ENCODE measurements at regions of chr22 and their contacts with region 1.

Region 1: DNA sequence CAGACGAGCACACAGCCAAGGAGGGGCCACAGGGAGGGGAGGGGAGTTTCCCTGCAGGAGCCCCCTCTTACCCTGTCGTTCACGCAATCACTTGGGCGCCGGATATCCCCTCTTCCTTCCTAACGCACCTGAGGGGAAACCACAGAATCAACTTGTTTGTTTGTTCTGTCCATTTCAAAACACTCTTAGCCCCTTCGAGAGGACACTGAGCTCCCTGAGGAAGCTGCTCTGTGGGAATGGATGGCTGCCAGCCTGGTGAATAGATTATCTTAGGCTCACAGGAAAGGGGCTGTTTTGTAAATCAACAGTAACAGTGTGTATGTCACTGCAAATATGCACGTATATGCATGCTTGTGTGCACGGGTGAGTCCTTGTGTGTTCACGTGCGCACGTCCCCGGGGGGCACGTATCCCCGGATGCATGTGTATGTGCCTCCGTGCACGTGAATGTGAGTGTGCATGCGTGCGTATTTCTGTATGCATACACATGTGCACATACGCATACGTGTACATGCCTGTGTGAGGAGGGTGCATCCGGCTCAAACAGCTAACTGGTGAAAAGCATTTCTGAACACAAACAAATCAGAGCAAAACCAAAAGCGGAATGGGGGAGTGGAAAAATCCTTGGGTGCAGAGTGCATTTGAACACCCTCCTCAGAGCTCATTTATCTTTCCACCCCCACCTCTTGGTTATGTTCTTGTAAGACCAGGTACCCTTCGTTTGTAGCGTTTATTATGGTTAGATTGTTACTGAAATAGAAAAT is 7.2 kb downstream of the ARSA start:
- DNase-seq: no peak
- H3K4me3 ChIP-seq: peak overlapping the region; percentile 37 to 50 (median 38)
- H3K27ac ChIP-seq: peak overlapping the region in 1 of 4 donors; percentile 19
- H3K4me1 ChIP-seq: peaks cover 24 to 33% (median 30%) of the 10 kb centered on the region in 4 donors
- H3K27me3 ChIP-seq: peaks cover 0 to 46% (median 4%) of the 10 kb centered on the region in 4 donors
- CTCF ChIP-seq: peak in 2 of 3 experiments; percentile 74 to 80
- EP300 ChIP-seq: no peak
- POLR2A ChIP-seq: no peak

Region 2: DNA sequence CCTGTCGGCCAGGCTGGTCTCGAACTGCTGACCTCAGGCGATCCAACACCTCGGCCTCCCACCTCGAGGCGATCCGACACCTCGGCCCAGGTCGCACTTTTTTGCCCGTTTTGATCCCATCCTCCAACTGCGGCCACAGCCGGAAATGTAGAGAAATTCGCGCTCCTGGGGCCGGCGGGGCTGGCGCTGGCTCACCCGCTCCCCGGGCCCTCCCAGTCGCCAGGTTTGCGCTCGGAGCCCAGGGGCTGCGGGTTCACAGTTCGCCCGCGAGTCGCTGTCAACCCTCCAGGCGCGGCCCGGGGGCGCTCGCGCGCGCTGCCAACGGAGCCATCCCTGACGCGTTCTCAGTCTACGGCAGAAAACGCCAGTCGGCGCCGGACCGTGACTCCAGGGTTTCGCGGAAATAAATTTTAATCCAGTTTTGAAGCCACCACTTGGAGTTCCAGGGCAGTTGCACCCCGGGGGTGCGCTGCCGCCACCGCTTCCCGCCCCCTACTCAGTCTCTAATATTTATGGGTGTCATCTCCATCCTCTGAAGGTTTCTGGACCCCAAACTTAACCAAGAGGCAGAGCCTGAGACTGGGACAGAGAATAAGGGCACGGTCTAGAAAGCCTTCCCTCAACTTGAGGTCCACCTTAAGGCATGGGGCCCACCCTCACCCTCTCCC is 76.6 kb before region 1 on chr22:
- intact Hi-C with region 1: loop called (anchors 5 kb)
- DNase-seq: no peak
- H3K4me3 ChIP-seq: peak overlapping the region; percentile 30 to 48 (median 35)
- H3K27ac ChIP-seq: peak overlapping the region in 1 of 4 donors; percentile 40
- H3K4me1 ChIP-seq: peaks cover 20 to 42% (median 41%) of the 10 kb centered on the region in 4 donors
- H3K27me3 ChIP-seq: peaks cover 9 to 61% (median 22%) of the 10 kb centered on the region in 4 donors
- CTCF ChIP-seq: peak; percentile 37 to 55 (median 46)
- EP300 ChIP-seq: no peak
- POLR2A ChIP-seq: no peak

Region 3: GRCh38 chr22:50656122-50657070 is 35.6 kb after region 1 on chr22:
- intact Hi-C with region 1: no loop called
- DNase-seq: no peak
- H3K4me3 ChIP-seq: no peak overlapping the region
- H3K27ac ChIP-seq: peak overlapping the region in 3 of 4 donors; percentile 41 to 62 (median 52)
- H3K4me1 ChIP-seq: peaks cover 0 to 14% (median 4%) of the 10 kb centered on the region in 4 donors
- H3K27me3 ChIP-seq: peaks cover 0 to 54% (median 0%) of the 10 kb centered on the region in 4 donors
- CTCF ChIP-seq: no peak
- EP300 ChIP-seq: no peak
- POLR2A ChIP-seq: no peak

Measured in esophagus muscularis mucosa (tissue), 4 donors.